PC-3 (cell line): ENCODE measurements at regions of chr1 and their contacts with region 1.

Region 1: DNA sequence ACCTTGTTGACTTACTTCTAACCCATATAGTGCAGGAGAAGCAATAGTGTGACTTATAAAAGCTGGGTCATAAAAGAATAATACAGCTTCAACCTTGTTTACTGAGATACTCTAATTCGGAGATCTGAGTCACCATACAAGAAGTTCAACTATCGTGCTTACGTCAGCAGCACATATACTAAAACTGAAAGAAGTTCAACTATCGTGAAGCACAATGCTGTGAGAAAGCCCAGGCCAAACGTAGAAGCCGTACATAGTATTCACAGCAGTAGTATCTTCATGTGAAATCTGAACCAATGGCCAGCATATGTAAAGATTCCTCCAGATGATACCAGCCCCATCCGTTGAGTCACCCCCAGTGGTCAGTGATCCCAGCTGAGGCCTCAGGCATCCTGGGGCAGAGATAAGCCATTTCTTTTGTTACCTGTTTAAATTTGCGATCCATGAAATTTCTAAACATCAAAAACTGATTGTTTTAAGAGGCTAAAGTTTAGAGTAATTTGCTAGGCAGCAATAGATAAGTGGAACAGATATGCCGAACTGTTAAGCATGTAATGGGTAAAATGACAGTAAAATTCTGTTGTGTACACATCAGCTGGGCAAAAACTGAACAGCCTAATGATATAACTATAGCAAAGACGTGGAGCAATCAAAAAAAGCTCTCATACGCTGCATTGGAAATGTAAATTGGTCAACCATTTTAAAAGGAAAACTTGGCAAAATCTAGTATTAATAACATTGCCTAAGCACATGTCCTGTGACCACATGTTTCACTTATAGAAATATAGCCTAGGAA is 53.9 kb upstream of the SAMD13 start:
- DNase-seq: peak; percentile 98
- ATAC-seq: peak; percentile 95
- H3K4me3 ChIP-seq: peak overlapping the region; percentile 51
- H3K27ac ChIP-seq: peak overlapping the region; percentile 98
- H3K4me1 ChIP-seq: peaks cover 35% of the 10 kb centered on the region
- H3K27me3 ChIP-seq: no peaks in the 10 kb centered on the region
- CTCF ChIP-seq: no peak

Region 2: GRCh38 chr1:83959824-83960498 is 287.7 kb before region 1 on chr1:
- CTCF ChIA-PET with region 1: no interaction called
- POLR2A ChIA-PET with region 1: no interaction called
- intact Hi-C with region 1: no loop called
- DNase-seq: no peak
- ATAC-seq: no peak
- H3K4me3 ChIP-seq: no peak overlapping the region
- H3K27ac ChIP-seq: no peak overlapping the region
- H3K4me1 ChIP-seq: no peaks in the 10 kb centered on the region
- H3K27me3 ChIP-seq: no peaks in the 10 kb centered on the region
- CTCF ChIP-seq: no peak

Region 3: GRCh38 chr1:84174051-84174556 is 73.5 kb before region 1 on chr1:
- CTCF ChIA-PET with region 1: no interaction called
- POLR2A ChIA-PET with region 1: no interaction called
- intact Hi-C with region 1: loop called (anchors 5 kb)
- DNase-seq: peak; percentile 85
- ATAC-seq: peak; percentile 99
- H3K4me3 ChIP-seq: no peak overlapping the region
- H3K27ac ChIP-seq: peak overlapping the region; percentile 31
- H3K4me1 ChIP-seq: peaks cover 11% of the 10 kb centered on the region
- H3K27me3 ChIP-seq: no peaks in the 10 kb centered on the region
- CTCF ChIP-seq: no peak

Region 4: GRCh38 chr1:84208935-84209334 is 38.7 kb before region 1 on chr1:
- CTCF ChIA-PET with region 1: no interaction called
- POLR2A ChIA-PET with region 1: no interaction called
- intact Hi-C with region 1: loop called (anchors 1 kb)
- DNase-seq: peak; percentile 22
- ATAC-seq: no peak
- H3K4me3 ChIP-seq: no peak overlapping the region
- H3K27ac ChIP-seq: no peak overlapping the region
- H3K4me1 ChIP-seq: peaks cover 8% of the 10 kb centered on the region; the same call in 1 of the 2 replicates
- H3K27me3 ChIP-seq: no peaks in the 10 kb centered on the region
- CTCF ChIP-seq: no peak

Region 5: DNA sequence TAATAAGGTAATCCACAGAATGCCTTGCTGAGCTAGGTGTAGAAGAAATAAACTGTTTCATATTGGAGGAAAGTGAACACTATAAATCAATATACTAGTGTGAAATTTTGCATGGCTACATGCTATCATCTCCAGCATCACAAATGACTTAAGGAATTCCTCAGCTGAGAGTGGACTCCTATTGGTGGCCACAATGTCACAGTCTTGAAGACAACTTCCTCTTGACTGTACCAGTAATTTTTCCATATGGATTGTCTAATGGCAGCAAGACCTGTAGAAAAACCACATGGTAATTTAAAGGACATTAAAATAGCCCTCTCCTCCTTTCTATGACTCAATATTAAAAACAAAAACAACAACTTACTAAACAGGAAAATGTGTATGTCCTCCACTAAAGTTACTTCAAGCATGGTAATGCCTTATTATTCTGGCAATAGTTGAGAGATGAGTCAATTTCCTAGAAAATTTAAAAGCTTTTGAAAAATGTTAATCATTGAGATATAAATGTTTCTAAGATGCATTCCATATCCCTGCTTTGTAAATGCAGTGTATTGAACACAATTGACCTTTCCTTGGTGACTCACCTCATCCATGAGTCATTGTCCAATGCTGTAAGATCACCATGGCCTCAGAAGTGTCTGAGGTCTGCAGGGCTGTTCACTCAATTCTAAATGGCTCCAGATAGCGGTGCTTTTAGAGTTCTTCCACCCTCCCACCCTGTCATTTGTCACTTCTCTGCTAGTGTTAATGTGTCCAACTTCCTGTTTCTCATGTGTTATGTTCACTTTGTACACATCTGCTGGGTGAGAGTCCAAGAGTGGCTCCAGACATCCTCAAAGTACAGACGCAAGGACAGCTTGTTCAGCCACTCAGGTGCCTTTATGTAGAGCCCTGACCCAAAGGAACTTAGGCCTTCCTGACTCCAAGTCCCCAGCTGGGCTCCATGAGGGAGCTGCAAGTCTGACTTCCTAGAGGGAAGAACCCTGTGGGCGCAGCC is 117.9 kb after region 1 on chr1:
- CTCF ChIA-PET with region 1: no interaction called
- POLR2A ChIA-PET with region 1: no interaction called
- intact Hi-C with region 1: loop called (anchors 1 kb)
- DNase-seq: peak; percentile 99
- ATAC-seq: peak; percentile 94
- H3K4me3 ChIP-seq: no peak overlapping the region
- H3K27ac ChIP-seq: peak overlapping the region; percentile 70
- H3K4me1 ChIP-seq: peaks cover 36% of the 10 kb centered on the region
- H3K27me3 ChIP-seq: no peaks in the 10 kb centered on the region
- CTCF ChIP-seq: no peak